ENCODE measurements at regions of chrX and their contacts with region 1.

Region 1: GRCh38 chrX:40097497-40098263 is at the start of gene BCOR:
- DNase-seq: peak; percentile 88
- ATAC-seq: peak; percentile 40
- H3K4me3 Mint-ChIP-seq: peak within 1 kb of the TSS; percentile 86
- H3K27ac Mint-ChIP-seq: peak within 1 kb of the TSS; percentile 77
- H3K4me1 Mint-ChIP-seq: peaks cover 22% of the 10 kb centered on the region
- H3K27me3 Mint-ChIP-seq: no peaks in the 10 kb centered on the region
- total RNA-seq, gene BCOR: 34.7 to 51.1 TPM

Region 2: DNA sequence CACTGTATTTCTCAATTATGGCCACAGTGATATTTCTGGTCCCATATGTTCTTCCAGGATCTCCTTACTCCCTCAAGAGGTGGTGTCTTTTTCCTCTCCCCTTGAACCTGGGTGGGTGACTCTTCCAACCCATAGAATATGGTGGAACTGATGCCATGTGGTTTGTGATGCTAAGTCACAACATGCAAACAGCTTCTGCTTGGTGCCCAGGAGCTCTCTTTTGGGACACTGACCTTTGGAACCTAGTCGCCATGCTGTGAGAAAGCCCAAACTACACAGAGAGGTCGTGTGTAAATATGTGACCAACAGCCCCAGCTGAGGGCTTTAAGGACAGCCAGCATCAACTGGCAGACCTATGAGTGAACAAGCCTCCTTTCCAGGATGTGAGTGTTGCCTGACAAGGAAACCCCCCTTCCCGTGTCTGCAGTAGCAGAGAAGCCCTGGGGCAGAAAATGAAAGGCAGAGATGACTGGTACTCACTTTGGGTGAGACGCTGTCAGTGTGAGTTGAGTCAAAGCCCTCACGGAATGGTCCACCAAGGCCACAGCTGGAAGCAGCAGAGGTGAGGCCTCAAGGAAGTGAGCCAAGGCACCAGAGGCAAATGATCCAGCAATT is 223.4 kb before region 1 on chrX:
- CTCF ChIA-PET with region 1: no interaction called
- POLR2A ChIA-PET with region 1: no interaction called
- intact Hi-C with region 1: loop called in 1 of 2 experiments (anchors 5 kb)
- DNase-seq: peak; percentile 84
- ATAC-seq: peak; percentile 80
- H3K4me3 Mint-ChIP-seq: no peak overlapping the region
- H3K27ac Mint-ChIP-seq: peak overlapping the region; percentile 95
- H3K4me1 Mint-ChIP-seq: peaks cover 53% of the 10 kb centered on the region
- H3K27me3 Mint-ChIP-seq: no peaks in the 10 kb centered on the region

Region 3: GRCh38 chrX:40084471-40085101 is 13.1 kb before region 1 on chrX:
- CTCF ChIA-PET with region 1: interaction called, 5 read pairs
- POLR2A ChIA-PET with region 1: no interaction called
- intact Hi-C with region 1: loop called in 1 of 2 experiments (anchors 1 kb)
- DNase-seq: no peak
- ATAC-seq: no peak
- H3K4me3 Mint-ChIP-seq: peak overlapping the region; percentile 56
- H3K27ac Mint-ChIP-seq: no peak overlapping the region
- H3K4me1 Mint-ChIP-seq: peaks cover 70% of the 10 kb centered on the region
- H3K27me3 Mint-ChIP-seq: no peaks in the 10 kb centered on the region

Region 4: DNA sequence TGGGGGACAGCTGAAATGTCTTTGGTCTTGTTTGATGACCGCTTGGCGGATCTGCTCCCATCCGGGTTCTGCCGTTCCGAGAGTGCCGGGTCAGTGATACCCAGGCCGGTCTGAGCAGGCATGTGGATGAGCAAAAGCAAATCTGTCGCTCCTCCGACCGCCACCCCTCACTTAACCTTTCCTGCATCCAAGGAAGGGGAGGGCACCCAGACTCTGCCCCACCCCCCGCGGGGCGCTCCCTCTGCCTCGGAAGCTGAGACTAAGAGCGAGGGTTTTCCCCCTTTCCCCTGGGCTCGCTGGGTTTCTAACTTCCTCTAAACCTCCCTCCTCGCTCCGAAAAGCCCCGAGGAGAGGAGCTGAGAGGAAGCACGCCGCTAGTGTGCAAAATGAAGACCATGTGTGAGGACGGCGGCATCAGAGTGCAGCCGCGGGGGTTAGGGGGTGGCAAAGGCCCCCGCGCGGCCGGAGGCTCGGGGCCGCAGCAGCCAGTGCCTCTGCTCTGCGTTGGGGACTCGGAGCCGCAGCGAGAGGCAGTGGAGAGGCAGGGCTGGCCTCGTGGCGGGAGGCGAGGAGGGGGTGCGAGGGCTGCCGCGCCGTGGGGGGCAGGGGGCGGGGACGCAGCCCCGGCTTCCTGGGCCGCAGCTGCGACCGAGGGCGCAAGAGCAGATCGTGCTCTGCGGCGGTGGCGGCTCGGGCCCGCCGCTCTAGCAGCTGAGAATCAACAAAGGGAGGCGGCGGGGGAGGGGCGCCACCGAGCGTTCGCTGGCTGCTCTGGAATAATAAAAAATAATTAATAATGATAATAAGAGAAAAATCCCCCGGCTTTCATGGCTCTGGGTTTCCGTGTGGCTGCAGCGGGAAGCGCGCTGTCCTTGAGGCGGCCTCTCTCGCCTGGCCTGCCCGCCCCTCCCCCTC is 55.9 kb after region 1 on chrX:
- CTCF ChIA-PET with region 1: interaction called, 4 read pairs
- POLR2A ChIA-PET with region 1: interaction called, 4 read pairs
- intact Hi-C with region 1: loop called in 1 of 2 experiments (anchors 2 kb)
- DNase-seq: peak; percentile 87
- ATAC-seq: peak; percentile 82
- H3K4me3 Mint-ChIP-seq: peak overlapping the region; percentile 70
- H3K27ac Mint-ChIP-seq: peak overlapping the region; percentile 37
- H3K4me1 Mint-ChIP-seq: peaks cover 13% of the 10 kb centered on the region
- H3K27me3 Mint-ChIP-seq: no peaks in the 10 kb centered on the region

Region 5: DNA sequence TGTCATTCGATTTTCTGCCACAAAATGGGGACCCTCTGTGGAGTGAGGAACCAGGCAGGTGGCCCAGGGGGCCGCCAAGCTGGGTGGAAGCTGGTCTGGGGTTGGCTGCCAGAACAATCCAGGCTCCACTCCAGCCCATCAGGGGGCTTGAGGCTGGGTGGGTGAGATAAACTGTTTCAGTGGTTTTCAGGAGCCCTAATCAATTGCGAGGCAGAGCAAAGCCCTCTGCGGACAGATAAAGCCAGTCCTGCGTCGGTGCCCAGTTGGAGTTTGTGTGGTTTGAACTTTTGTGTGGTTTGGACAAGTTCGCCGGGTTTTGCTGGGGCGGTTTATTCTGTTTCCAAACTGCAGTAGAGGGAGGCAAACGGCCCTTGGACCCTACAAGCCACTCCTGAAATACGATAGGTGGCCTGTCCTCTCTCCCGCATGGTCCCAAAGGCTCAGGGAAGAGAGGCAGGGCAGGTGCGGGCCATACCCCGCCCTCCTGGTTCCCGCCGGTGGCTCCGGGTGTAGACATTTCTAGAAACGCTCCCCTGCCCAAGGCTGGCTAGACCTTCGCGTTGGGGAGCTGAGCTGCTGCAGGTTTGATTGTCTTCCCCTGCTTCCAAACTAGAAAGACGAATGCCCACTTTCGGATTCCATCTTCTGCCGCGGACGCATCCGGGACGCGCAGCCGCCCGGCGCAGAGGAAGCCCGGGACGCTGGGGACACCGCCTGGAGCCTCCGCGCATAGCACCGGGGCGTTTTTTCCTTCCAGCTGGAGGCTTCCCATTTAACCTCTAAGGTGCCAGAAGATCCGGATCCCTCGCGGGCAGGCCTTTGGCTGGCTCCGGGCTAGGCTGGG is 169.0 kb after region 1 on chrX:
- CTCF ChIA-PET with region 1: no interaction called
- POLR2A ChIA-PET with region 1: no interaction called
- intact Hi-C with region 1: loop called in 1 of 2 experiments (anchors 5 kb)
- DNase-seq: peak; percentile 74
- ATAC-seq: peak; percentile 88
- H3K4me3 Mint-ChIP-seq: peak overlapping the region; percentile 60
- H3K27ac Mint-ChIP-seq: peak overlapping the region; percentile 63
- H3K4me1 Mint-ChIP-seq: peaks cover 13% of the 10 kb centered on the region
- H3K27me3 Mint-ChIP-seq: no peaks in the 10 kb centered on the region